Esophagus muscularis mucosa (tissue), 4 donors: ENCODE measurements at regions of chr13 and their contacts with region 1.

Region 1: GRCh38 chr13:94753327-94753726 is 41.0 kb upstream of the SOX21 start:
- DNase-seq: no peak
- H3K4me3 ChIP-seq: no peak overlapping the region
- H3K27ac ChIP-seq: no peak overlapping the region
- H3K4me1 ChIP-seq: no peaks in the 10 kb centered on the region
- H3K27me3 ChIP-seq: peaks cover 0 to 2% (median 0%) of the 10 kb centered on the region in 4 donors
- CTCF ChIP-seq: no peak
- EP300 ChIP-seq: no peak
- POLR2A ChIP-seq: no peak

Region 2: GRCh38 chr13:94776956-94777355 is 23.6 kb after region 1 on chr13:
- intact Hi-C with region 1: loop called (anchors 2 kb)
- DNase-seq: no peak
- H3K4me3 ChIP-seq: no peak overlapping the region
- H3K27ac ChIP-seq: no peak overlapping the region
- H3K4me1 ChIP-seq: no peaks in the 10 kb centered on the region
- H3K27me3 ChIP-seq: no peaks in the 10 kb centered on the region
- CTCF ChIP-seq: no peak
- EP300 ChIP-seq: no peak
- POLR2A ChIP-seq: no peak